T-cell (primary cell): ENCODE measurements at regions of chr11 and their contacts with region 1.

Region 1: GRCh38 chr11:61332797-61333549 is at the starts of genes DDB1 and TKFC:
- DNase-seq: peak; percentile 94 to 99 (median 96)
- ATAC-seq: peak; percentile 94 to 96 (median 95)
- H3K4me3 ChIP-seq: peak within 1 kb of the TSS; percentile 74 to 83
- H3K4me3 Mint-ChIP-seq: peak within 1 kb of the TSS; percentile 92 to 94 (median 92)
- H3K27ac ChIP-seq: peak within 1 kb of the TSS; percentile 85
- H3K27ac Mint-ChIP-seq: peak within 1 kb of the TSS; percentile 97 to 99
- H3K4me1 ChIP-seq: peaks cover 22 to 46% of the 10 kb centered on the region in 2 experiments
- H3K4me1 Mint-ChIP-seq: peaks cover 60 to 61% (median 61%) of the 10 kb centered on the region in 3 donors
- H3K27me3 ChIP-seq: no peaks in the 10 kb centered on the region
- H3K27me3 Mint-ChIP-seq: no peaks in the 10 kb centered on the region
- total RNA-seq, gene DDB1: 165 to 186 (median 176) TPM
- total RNA-seq, gene TKFC: 30.9 to 53.9 (median 46.6) TPM

Region 2: DNA sequence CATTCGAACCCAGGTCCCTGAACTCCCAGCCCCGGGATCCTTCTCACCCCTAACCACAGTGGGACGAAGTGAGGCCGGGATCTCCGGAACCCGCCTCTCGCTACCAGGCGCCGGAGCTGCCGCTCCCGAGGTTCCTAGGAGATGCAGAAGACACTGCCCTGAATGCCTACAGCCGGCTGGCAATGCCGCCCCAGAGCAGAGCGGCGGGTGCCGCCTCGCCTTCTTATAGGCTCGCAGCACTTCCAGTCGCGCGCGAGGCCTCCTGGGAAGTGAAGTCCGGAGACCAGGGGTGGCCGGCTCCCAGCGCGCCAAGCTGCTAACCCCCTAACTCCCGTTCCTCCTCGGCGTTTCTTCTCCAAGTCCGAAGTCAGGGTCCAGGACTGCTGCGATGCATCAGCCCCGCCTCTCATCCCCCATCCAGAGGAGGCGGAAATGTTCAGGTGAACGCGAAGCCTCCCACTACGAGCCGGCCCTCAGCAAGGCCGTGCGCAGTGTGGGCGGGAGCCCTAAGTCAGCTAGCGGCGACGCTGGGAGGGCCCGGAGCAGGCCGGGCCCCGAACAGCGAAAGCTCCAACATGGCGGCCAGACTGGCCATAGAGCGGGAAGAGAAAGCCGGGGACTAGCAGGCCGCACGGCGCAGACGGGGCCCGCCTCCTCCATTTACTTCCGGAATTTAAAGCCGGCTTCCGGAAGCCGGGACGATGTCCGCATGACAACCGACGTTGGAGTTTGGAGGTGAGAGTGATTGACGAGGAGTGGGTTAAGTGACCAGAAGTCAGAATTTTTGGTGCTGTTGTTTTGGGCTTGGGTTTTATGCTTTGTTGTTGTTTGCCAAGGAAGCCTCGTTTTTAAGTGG is 28.9 kb after region 1 on chr11 and contains the starts of genes CYB561A3 and TMEM138:
- CTCF ChIA-PET with region 1: interaction called, 10 to 54 read pairs
- POLR2A ChIA-PET with region 1: interaction called, 3 to 4 read pairs
- DNase-seq: peak; percentile 74 to 90 (median 82)
- ATAC-seq: peak; percentile 89 to 93 (median 92)
- H3K4me3 ChIP-seq: peak within 1 kb of the TSS; percentile 89 to 93
- H3K4me3 Mint-ChIP-seq: peak within 1 kb of the TSS; percentile 99 to 100 (median 100)
- H3K27ac ChIP-seq: peak within 1 kb of the TSS; percentile 96
- H3K27ac Mint-ChIP-seq: peak within 1 kb of the TSS; percentile 98 to 100
- H3K4me1 ChIP-seq: peaks cover 10 to 38% of the 10 kb centered on the region in 2 experiments
- H3K4me1 Mint-ChIP-seq: peaks cover 33 to 53% (median 46%) of the 10 kb centered on the region in 3 donors
- H3K27me3 ChIP-seq: no peaks in the 10 kb centered on the region
- H3K27me3 Mint-ChIP-seq: no peaks in the 10 kb centered on the region
- total RNA-seq, gene CYB561A3: 34.8 to 49.1 (median 47.3) TPM
- total RNA-seq, gene TMEM138: 48.7 to 57.7 (median 56.6) TPM

Region 3: DNA sequence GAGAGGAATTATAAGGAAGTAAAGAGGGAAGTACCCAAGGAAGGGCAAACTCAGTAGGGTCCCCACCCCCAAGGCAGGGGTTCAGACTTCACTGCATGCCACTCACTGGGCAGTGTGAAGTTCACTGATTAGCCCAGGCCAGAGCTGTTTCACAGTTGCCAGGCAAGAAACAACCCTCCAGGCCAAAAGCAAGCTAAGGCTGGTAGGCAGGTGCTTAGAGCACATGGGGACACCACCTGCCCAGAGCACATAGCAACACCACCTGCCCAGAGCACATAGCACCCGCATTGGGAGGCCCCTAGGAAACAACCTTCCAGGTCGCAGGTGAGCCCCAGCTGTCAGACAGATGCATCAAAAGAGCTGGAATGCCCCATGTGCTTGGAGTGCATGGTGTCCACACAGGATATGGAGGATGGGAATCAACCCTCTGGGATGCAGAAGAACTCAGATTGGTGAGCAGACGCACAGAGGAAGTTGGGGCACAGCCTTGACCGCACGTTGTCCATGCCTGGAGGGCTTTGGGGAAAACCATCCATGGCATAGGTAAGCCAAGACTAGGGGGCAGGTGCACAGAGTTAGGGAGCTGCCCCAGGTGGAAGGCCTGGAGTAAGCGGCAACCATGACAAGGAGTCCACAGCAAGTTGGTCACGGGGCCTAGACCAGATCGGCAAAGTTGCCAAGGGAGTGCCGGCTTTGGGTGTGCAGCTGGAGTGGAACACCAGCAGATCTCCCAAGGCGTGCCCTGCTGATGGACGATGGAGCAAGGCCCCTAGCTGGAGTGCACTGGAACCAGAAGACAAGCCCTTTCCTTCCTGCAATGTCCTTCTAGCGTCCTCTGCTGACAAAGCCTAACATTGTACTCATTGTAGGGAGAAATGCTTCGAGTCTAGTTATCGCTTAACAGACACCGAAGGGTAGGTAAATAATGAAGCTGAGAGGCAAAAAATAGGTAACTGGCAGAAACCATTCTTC is 51.6 kb after region 1 on chr11:
- CTCF ChIA-PET with region 1: interaction called, 24 to 114 read pairs
- POLR2A ChIA-PET with region 1: interaction called, 5 to 6 read pairs
- DNase-seq: no peak
- ATAC-seq: no peak
- H3K4me3 ChIP-seq: no peak overlapping the region
- H3K4me3 Mint-ChIP-seq: no peak overlapping the region
- H3K27ac ChIP-seq: no peak overlapping the region
- H3K27ac Mint-ChIP-seq: no peak overlapping the region
- H3K4me1 ChIP-seq: peaks cover 0 to 6% of the 10 kb centered on the region in 2 experiments
- H3K4me1 Mint-ChIP-seq: peaks cover 7 to 9% (median 8%) of the 10 kb centered on the region in 3 donors
- H3K27me3 ChIP-seq: no peaks in the 10 kb centered on the region
- H3K27me3 Mint-ChIP-seq: no peaks in the 10 kb centered on the region

Region 4: DNA sequence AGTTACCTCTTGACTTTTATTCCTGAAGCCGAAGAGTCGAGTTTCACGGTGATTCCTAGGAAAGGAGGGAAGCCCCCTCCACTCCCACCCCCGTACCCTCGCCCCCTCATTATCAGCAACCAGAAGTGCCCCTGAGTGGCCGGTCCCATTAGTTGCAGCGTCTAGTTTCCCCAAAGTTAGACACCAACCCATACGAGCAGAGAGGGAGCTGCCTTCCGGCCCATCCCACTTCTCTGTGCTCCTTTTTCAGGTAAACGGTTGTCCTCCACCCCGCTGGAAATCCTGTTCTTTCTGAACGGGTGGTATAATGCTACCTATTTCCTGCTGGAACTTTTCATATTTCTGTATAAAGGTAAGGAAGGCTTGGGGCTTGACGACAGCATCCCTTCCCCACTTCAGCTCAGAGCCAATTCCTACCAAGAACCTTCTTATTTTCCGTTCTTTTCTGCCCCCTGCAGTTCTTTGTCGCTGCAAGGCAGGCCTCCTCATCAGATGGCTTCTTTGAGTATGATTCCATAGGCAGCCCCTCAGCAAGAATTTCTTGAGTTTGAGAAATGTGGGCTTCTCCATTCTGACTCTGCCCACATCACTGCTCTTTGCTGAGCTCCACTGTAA is 60.1 kb after region 1 on chr11:
- CTCF ChIA-PET with region 1: interaction called, 3 to 23 read pairs
- POLR2A ChIA-PET with region 1: interaction called, 3 to 5 read pairs
- DNase-seq: peak in 13 of 35 experiments; percentile 6 to 54 (median 14)
- ATAC-seq: peak; percentile 34 to 64 (median 44)
- H3K4me3 ChIP-seq: peak overlapping the region; percentile 76 to 77
- H3K4me3 Mint-ChIP-seq: peak overlapping the region; percentile 91 to 95 (median 91)
- H3K27ac ChIP-seq: peak overlapping the region; percentile 89
- H3K27ac Mint-ChIP-seq: peak overlapping the region; percentile 98 to 99
- H3K4me1 ChIP-seq: peaks cover 6 to 27% of the 10 kb centered on the region in 2 experiments
- H3K4me1 Mint-ChIP-seq: peaks cover 24 to 27% (median 24%) of the 10 kb centered on the region in 3 donors
- H3K27me3 ChIP-seq: no peaks in the 10 kb centered on the region
- H3K27me3 Mint-ChIP-seq: no peaks in the 10 kb centered on the region

Region 5: DNA sequence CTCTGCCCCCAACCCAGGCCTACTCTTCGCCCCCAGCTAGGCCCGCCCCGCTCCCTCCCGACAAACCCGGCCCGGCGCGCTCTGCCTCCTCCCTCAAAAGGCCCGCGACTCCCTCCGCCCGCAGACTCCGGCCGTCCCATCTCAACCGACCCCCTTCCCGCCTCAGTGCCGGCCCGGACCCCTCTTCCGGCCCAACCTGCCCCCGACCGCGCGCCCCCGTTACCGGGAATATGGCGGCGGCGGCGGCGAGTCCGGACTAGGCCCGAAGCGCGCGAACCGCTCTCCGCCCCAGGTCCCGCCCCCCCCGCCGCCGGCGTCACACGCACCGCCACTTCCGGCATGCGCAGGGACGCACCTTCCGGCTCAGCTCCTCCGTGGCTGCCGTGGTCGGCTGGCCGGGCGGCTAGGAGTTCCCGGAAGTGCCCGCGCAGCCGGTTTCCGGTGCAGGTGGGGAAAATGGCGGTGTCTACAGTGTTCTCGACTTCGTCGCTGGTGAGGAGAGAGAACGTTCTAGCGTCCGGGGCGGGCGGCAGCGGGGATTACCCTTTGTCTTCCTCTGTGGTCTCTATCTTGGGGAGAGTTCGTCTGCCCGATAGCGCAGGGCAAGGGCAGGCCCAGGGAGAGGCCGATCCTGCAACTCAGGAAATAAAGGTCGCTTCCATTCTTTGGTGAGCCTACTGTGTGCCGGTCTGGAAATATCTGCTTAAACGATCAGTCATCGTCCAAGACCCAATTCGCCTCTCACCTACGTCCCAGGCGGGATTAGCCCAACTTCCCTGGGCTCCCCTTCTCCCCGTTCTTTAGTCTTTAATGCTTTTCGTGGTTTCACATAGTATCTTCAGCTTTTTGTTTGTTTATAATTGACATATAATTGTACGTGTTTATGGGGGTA is 97.0 kb after region 1 on chr11 and contains the starts of genes CPSF7 and SDHAF2:
- CTCF ChIA-PET with region 1: interaction called, 11 to 17 read pairs
- POLR2A ChIA-PET with region 1: interaction called in 1 of 2 experiments, 4 read pairs
- DNase-seq: peak; percentile 92 to 98 (median 97)
- ATAC-seq: peak; percentile 88 to 94 (median 90)
- H3K4me3 ChIP-seq: peak within 1 kb of the TSS; percentile 87 to 97
- H3K4me3 Mint-ChIP-seq: peak within 1 kb of the TSS; percentile 92 to 98 (median 98)
- H3K27ac ChIP-seq: peak within 1 kb of the TSS; percentile 99
- H3K27ac Mint-ChIP-seq: peak within 1 kb of the TSS; percentile 99 to 100
- H3K4me1 ChIP-seq: peaks cover 14 to 42% of the 10 kb centered on the region in 2 experiments
- H3K4me1 Mint-ChIP-seq: peaks cover 65 to 76% (median 74%) of the 10 kb centered on the region in 3 donors
- H3K27me3 ChIP-seq: no peaks in the 10 kb centered on the region
- H3K27me3 Mint-ChIP-seq: no peaks in the 10 kb centered on the region
- total RNA-seq, gene CPSF7: 104 to 144 (median 117) TPM
- total RNA-seq, gene SDHAF2: 36.2 to 60.7 (median 56.4) TPM